HEK293T (cell line): ENCODE measurements at regions of chr3 and their contacts with region 1.

Region 1: DNA sequence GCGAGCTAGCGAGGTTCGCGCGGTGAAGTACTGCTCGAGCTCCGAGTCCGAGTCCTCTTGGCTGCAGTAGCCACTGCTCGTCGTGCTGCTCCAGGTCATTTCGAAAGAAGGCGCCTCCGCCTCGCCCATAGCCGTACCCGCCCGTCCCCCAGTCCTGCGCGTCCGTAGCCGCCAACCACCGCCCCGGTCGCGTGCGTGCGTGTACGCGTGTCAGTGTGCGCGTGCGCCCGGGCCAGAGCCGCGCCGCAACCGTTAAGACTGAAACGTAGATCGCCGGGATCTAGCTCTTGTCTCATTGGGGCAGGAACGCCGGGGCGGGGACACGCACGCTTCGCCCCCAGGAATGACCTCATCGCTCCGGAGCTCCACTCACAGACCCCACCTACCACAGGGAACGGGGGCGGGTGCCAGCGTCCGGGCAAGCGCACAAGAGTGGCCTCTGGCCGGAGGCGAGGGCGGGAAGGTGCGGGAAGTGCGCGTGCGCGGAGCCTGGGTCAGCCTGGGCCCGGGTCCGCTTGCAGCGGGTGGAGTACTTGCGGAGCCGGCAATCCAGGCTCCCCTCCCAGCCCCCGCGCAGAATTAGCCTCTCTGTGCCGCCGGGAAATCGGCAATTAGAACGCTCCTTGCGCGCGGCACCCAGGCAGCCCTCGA is 3.3 kb downstream of the RASSF1 start:
- DNase-seq: peak; percentile 98

Region 2: DNA sequence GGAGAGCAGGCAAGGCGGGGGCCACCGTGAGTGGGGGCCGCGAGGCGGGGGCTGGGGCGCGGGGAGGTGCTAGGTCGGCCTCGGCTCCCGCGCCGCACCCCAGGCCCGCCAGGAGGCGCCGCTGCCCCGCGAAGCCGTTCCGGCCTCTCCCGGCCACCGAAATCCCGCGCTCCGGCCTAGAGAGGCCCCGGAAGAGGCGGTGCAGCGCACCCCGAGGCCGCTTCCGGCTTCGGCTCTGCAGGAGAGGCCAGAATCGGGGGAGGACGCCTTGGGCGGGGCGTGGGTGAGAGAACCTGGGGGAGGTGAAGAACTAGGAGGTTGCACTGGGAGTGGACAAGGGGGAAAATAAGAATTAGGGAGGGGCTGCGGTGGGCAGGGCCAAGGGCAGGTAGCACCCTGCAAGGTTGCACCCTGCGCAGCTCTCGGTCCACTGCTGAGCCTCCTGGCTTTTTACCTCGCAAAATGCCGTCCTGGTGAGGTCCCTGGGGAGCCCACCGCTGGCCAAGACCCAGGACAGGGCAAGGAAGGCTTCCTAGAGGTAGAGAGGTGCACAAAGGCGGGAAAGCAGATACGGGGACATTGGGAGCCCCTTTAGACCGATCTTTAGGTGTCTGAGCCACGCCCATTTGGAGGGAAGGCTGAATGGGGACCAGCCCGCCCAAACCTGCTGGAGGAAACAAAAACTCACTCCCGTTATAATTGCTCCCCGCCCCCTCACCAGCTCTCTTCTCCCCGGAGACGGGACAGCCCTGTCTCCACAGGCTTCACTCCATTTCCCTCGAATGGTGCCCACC is 109.7 kb before region 1 on chr3:
- CTCF ChIA-PET with region 1: no interaction called
- POLR2A ChIA-PET with region 1: interaction called, 13 read pairs
- DNase-seq: peak; percentile 89

Region 3: DNA sequence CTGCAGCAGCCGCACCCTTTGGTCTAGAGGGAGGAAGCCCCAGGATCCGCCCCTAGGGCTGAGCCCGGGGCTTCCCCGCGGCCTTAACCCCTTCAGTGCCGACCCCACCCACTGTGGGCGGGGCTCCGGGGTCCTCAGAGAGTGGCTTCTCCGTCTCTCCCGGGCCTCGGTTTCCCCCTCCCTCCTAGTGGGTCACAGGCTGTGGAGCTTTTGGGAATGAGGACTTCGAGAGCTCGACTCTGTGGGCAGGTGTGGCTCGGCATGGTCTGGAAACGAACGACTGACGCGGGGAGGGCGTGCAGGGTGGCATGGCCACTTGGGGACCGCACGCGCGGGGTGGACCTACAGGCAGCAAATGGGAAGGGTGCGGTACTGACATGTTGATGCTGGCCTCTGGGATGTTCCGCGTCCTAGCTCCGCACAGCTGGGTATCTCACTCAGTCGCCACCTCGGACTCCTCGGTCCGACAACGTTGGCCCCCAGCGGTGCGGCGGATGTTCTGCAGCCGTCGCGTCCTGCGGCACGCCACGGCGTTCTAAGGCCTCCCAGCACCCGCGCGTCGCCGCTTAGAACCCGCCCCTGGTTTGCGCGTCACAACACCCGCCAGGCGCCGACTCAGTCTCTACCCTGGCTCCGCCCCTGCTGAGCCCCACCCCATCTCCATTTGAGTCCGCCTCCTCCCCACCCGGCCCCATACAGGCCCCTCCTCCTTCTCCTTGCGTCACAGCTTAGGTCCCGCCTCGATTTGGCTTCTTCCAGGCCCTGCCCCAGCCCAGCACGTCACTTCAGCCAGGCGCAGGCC is 38.3 kb before region 1 on chr3 and contains the starts of genes HYAL3 and NAA80:
- CTCF ChIA-PET with region 1: no interaction called
- POLR2A ChIA-PET with region 1: interaction called, 23 read pairs
- DNase-seq: peak; percentile 98

Region 4: DNA sequence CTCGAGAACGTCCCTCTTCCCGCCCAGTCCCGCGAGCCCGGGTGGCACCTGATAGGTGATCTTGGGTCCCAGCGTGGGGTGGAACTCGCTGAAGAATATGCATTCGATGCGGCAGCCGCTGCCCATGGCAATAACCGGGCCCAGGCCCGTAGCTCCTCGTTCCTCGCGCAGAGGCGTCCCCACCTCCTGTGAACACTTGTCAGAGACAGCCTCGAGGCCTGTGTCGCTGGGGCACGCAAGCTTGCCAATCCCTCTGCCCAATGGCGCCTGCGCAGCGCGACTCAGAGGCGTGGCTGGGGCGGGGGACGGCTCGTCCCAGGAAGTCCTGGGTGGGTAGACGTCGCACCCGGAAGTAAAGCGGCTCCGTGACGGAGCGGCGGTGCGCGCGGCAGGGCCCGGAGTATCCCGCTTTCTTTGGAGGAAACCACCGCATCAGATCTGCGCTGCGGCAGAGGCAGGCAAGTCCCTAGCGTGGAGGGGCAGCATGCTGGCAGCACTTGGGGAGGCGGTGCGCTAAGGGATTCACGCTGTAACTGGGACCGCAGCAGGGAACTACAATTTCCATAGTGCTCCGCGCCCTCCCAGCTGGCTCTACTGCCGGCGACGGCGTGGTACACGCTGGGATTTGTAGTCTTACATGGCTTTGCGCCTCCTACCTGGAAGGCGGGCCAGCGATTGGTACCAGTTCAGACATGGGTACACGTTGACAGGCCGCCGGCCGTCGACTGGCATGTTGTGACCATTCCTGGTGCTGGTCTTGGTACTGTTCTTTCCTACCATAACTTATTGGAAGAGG is 13.4 kb after region 1 on chr3 and contains the starts of genes CYB561D2 and NPRL2:
- CTCF ChIA-PET with region 1: interaction called, 7 read pairs
- POLR2A ChIA-PET with region 1: interaction called, 119 read pairs
- DNase-seq: peak; percentile 96

Region 5: DNA sequence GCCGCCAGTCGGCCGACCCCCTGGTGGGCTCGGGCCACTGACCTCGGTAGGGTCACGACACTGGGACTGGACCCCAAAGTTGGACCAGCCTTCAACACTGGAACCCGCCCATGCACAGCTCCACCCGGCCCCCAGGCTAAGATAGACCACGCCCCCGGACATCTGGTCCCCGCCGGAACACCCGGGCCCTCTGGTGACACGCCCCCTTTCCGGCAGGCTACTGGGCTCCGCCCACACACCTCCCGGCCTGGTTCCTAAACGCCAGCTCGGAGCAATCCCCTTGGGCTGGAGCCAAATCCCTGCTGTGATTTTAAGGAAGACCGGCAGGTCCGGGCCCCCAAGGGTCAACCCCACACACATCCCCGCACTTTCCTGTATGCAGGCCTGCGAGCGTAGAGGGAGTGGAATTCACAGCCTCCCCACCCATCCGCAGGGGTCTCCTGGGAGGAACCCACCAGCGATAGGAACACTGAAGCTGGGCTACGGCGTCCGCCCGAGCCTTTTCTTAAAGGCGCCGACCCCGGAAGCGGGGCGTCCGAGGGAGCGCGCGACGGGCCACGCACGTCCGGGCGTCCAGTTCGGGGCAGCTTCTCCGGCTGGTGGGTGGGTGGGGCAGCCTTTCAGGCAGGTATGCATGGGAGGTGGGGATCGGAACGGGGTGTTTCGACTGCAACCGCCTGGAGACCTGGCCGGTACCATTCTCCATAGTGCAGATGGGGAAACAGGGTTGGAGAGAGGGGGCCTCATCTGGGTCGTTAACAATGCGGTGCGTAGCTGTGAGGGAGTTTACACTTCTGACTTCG is 231.8 kb after region 1 on chr3 and contains the start of gene HEMK1:
- CTCF ChIA-PET with region 1: no interaction called
- POLR2A ChIA-PET with region 1: interaction called, 11 read pairs
- DNase-seq: peak; percentile 99